Caco-2 (cell line): ENCODE measurements at regions of chr7 and their contacts with region 1.

Region 1: DNA sequence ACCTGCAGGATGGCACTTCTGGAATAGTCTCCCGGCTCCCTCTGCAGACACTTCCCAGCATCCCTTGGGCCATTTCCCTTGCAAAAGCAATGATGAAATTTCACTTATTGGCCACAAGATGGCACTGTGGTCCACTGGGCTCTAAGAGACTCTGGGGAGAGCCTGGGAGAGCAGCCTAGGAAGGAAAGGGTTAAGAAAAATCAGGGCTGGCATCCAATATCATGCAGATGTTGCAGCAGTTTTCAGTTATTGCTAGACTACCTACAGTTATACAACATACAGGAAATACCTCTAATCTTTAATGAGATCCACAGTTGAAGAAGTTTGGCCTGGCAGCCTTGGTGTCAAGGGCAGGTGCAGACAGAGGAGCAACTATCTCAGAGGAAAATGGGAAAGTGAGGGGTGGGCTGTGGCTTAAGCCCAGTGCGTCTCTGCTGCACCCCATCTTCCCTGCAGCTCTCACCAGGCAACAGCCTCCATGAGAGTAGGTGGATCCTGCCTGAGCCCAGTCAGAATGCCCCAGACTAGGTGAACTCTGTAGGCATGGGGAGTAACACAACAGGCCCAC is 100.2 kb upstream of the PRSS58 start:
- DNase-seq: peak in 1 of 2 experiments; percentile 56
- H3K4me3 ChIP-seq: no peak overlapping the region
- H3K4me3 Mint-ChIP-seq: peak overlapping the region; percentile 20
- H3K27ac Mint-ChIP-seq: no peak overlapping the region
- H3K4me1 ChIP-seq: 0 out of 2 replicates have a peak, but pooled peaks cover 3% of the 10 kb centered on the region
- H3K4me1 Mint-ChIP-seq: peaks cover 5% of the 10 kb centered on the region
- H3K27me3 ChIP-seq: no peaks in the 10 kb centered on the region
- H3K27me3 Mint-ChIP-seq: peaks cover 4% of the 10 kb centered on the region
- CTCF ChIP-seq: peak; percentile 75 to 80

Region 2: DNA sequence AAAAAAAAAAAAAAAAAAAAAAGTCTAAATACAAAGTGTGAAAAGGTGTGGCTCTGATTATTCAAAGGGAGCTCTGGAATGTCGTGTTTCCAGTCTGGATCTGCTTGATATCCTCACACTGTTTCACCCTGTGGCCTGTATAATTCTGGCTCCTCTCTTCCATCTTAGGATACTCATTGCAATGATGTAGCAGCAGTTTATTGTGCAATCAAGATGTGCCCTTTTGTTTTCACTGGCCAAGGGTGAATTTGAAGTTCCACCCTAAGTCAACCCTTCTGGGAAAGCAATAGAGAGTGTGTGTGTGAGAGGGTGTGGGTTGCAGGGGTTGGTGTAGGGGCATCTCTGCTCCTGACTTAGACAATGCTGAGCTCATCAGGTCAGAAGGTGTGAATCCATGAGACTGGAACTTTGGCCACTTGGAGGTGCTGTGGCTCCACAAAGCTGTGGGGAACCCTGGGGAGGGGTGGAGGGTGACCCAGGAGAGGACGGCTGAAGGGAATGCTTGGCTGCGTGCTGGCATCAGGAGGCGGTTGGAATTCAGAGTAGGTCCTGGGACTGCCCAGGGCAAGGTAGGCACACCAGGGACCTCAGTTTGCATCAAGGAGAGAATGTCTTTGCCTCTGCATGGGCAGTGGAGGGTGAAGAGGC is 17.8 kb after region 1 on chr7:
- CTCF ChIA-PET with region 1: interaction called, 8 read pairs
- POLR2A ChIA-PET with region 1: interaction called, 9 read pairs
- intact Hi-C with region 1: loop called (anchors 2 kb)
- DNase-seq: peak; percentile 73
- H3K4me3 ChIP-seq: no peak overlapping the region
- H3K4me3 Mint-ChIP-seq: peak overlapping the region; percentile 16
- H3K27ac Mint-ChIP-seq: peak overlapping the region; percentile 85
- H3K4me1 ChIP-seq: peaks cover 9% of the 10 kb centered on the region
- H3K4me1 Mint-ChIP-seq: peaks cover 23% of the 10 kb centered on the region
- H3K27me3 ChIP-seq: no peaks in the 10 kb centered on the region
- H3K27me3 Mint-ChIP-seq: peaks cover 3% of the 10 kb centered on the region
- CTCF ChIP-seq: peak in 1 of 2 experiments; percentile 44

Region 3: GRCh38 chr7:142418326-142418725 is 60.3 kb after region 1 on chr7:
- CTCF ChIA-PET with region 1: no interaction called
- POLR2A ChIA-PET with region 1: no interaction called
- intact Hi-C with region 1: loop called (anchors 5 kb)
- DNase-seq: no peak
- H3K4me3 ChIP-seq: no peak overlapping the region
- H3K4me3 Mint-ChIP-seq: no peak overlapping the region
- H3K27ac Mint-ChIP-seq: no peak overlapping the region
- H3K4me1 ChIP-seq: no peaks in the 10 kb centered on the region
- H3K4me1 Mint-ChIP-seq: peaks cover 4% of the 10 kb centered on the region
- H3K27me3 ChIP-seq: no peaks in the 10 kb centered on the region; the same call in 1 of the 2 replicates
- H3K27me3 Mint-ChIP-seq: peaks cover 10% of the 10 kb centered on the region
- CTCF ChIP-seq: no peak

Region 4: GRCh38 chr7:142438235-142438922 is 80.3 kb after region 1 on chr7:
- CTCF ChIA-PET with region 1: no interaction called
- POLR2A ChIA-PET with region 1: no interaction called
- intact Hi-C with region 1: no loop called
- DNase-seq: peak in 1 of 2 experiments; percentile 35
- H3K4me3 ChIP-seq: no peak overlapping the region
- H3K4me3 Mint-ChIP-seq: no peak overlapping the region
- H3K27ac Mint-ChIP-seq: no peak overlapping the region
- H3K4me1 ChIP-seq: peaks cover 12% of the 10 kb centered on the region; the same call in 1 of the 2 replicates
- H3K4me1 Mint-ChIP-seq: peaks cover 16% of the 10 kb centered on the region
- H3K27me3 ChIP-seq: no peaks in the 10 kb centered on the region
- H3K27me3 Mint-ChIP-seq: peaks cover 3% of the 10 kb centered on the region
- CTCF ChIP-seq: peak; percentile 49 to 54